Activated CD4-positive, alpha-beta memory T cell treated with anti-CD3 and anti-CD28 coated beads, Interleukin-2, amount 10 ng/mL, durations not matched to agents 7 days and 5 days (primary cell): ENCODE measurements at regions of chr14 and their contacts with region 1.

Region 1: DNA sequence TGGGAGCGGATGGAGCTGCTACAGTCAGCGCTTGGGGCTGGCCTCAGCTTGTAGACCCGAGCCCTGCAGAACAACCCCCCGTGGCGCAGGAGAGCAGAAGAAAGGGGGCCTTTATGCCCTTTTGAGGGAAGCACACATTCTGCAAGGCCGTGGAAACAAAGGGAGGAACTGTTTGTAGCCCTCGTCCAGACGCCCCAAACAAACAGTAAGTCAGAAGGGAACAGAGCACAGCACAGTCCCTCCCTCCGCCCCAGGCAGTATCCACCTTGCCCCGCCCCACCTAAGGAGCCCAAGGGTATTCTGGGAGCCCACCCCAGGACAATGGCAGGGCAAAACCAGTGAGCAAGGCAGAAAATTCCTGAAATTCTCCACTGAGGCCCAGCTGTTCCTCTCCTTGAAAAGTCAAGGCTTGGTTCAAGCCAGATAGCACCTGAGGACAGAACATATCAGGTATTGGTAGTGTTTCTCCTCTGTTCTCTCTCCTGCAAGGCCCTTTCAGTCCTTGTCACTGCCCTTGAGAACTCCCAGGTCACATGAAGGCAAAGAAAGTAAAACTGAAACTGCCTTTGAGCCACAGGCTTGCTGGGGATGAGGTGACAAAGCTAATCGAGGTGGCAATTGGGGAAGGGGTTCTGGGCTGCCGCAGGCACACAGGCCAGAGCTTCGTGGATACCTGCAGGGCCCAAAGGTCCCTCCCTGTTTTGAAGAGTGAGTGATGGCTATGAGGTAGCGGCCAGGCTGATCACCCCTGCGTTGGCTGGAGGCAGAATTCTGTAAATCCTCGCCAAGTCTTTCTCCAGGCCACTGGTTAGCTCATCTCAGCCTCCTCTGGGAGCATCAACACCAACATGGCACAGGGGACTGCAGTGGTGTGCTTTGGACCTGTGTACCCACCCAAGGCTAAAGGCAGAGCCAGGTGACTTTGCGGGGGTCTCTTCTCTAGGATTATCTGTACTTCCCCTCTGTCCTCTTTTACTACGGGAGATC is 499 bp downstream of the DGLUCY start:
- DNase-seq: peak; percentile 83
- H3K4me3 Mint-ChIP-seq: peak overlapping the region; percentile 94
- H3K27ac Mint-ChIP-seq: peak overlapping the region; percentile 96
- H3K4me1 Mint-ChIP-seq: peaks cover 65% of the 10 kb centered on the region
- H3K27me3 Mint-ChIP-seq: no peaks in the 10 kb centered on the region

Region 2: DNA sequence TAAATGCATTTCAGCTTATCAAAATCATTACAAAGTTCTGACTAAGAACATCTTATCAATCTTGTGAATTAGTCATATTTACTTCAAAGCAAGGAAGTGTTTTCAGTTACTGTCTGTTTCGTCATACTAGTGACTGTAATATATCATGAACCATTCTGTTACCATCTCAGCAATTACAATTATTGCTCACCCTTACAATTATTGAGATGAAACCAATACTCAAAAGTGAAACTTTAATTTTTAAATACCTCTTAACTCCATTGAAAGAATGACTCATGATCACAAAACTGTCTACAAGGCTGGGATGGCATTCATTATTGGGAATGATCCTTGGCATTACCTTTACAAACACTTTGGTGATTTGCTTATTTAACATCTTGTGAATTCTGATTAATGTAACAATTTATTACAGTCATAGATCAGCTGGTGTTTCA is 144.2 kb before region 1 on chr14:
- CTCF ChIA-PET with region 1: no interaction called
- POLR2A ChIA-PET with region 1: interaction called, 18 read pairs
- DNase-seq: no peak
- H3K4me3 Mint-ChIP-seq: peak overlapping the region; percentile 51
- H3K27ac Mint-ChIP-seq: peak overlapping the region; percentile 82
- H3K4me1 Mint-ChIP-seq: peaks cover 45% of the 10 kb centered on the region
- H3K27me3 Mint-ChIP-seq: no peaks in the 10 kb centered on the region

Region 3: DNA sequence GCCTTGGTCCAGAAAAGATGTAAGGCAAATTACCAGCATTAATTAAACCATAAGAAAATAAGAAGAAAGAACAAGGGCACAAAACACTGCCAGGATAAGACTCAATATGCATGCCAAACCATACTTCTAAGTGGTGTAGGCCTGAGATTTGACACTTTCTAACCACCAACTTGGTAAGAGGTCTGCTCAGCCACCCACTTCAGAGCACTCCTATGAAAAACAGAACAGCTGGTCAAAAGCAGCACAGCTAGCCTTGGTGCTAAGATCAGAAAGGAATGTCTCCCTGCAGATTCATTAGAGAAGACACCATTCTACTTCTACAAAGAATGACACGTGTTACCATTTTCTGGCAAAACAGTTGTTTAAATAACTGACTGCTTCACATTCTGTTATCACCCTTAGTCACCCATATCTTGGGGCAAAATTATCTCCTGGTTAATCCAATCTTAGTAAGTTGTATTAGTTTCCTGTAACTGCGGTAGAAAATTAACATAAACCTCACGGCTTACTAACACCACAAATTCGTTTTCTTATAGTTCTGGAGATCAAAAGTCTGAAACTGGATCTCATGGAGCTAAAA is 67.1 kb before region 1 on chr14:
- CTCF ChIA-PET with region 1: interaction called, 4 read pairs
- POLR2A ChIA-PET with region 1: interaction called, 21 read pairs
- DNase-seq: no peak
- H3K4me3 Mint-ChIP-seq: no peak overlapping the region
- H3K27ac Mint-ChIP-seq: peak overlapping the region; percentile 16
- H3K4me1 Mint-ChIP-seq: peaks cover 52% of the 10 kb centered on the region
- H3K27me3 Mint-ChIP-seq: no peaks in the 10 kb centered on the region

Region 4: DNA sequence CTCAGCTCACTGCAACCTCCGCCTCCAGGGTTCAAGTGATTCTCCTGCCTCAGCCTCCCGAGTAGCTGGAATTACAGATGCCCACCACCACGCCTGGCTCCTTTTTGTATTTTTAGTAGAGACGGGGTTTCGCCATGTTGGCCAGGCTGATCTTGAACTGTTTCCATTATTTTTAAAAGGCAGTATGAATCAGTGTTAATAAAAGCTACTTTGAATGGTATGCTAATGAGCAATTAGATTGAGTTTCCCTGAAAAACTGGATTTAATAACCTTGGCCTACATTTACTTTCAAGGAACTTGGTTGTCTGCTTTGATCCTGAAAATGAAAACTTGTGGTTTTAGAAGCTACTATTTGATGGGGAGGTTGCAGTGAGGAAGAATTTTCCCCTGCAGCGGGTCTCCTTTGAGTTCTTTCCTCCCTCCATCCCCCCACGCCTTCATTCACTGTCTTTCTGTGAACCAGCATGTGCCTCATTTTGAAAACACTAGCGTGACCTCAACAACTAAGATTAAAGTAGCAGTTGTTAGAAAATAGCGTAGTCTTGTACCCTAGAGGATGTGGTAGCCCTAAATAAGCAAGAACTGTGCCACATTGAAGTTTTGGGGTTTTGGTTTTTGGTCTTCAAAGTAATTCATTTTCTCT is 36.2 kb before region 1 on chr14:
- CTCF ChIA-PET with region 1: interaction called, 19 read pairs
- POLR2A ChIA-PET with region 1: interaction called, 107 read pairs
- DNase-seq: peak; percentile 64
- H3K4me3 Mint-ChIP-seq: peak overlapping the region; percentile 40
- H3K27ac Mint-ChIP-seq: peak overlapping the region; percentile 95
- H3K4me1 Mint-ChIP-seq: peaks cover 61% of the 10 kb centered on the region
- H3K27me3 Mint-ChIP-seq: no peaks in the 10 kb centered on the region

Region 5: GRCh38 chr14:91127401-91127854 is 13.1 kb after region 1 on chr14:
- CTCF ChIA-PET with region 1: interaction called, 3 read pairs
- POLR2A ChIA-PET with region 1: interaction called, 43 read pairs
- DNase-seq: no peak
- H3K4me3 Mint-ChIP-seq: no peak overlapping the region
- H3K27ac Mint-ChIP-seq: no peak overlapping the region
- H3K4me1 Mint-ChIP-seq: peaks cover 37% of the 10 kb centered on the region
- H3K27me3 Mint-ChIP-seq: no peaks in the 10 kb centered on the region

Region 6: DNA sequence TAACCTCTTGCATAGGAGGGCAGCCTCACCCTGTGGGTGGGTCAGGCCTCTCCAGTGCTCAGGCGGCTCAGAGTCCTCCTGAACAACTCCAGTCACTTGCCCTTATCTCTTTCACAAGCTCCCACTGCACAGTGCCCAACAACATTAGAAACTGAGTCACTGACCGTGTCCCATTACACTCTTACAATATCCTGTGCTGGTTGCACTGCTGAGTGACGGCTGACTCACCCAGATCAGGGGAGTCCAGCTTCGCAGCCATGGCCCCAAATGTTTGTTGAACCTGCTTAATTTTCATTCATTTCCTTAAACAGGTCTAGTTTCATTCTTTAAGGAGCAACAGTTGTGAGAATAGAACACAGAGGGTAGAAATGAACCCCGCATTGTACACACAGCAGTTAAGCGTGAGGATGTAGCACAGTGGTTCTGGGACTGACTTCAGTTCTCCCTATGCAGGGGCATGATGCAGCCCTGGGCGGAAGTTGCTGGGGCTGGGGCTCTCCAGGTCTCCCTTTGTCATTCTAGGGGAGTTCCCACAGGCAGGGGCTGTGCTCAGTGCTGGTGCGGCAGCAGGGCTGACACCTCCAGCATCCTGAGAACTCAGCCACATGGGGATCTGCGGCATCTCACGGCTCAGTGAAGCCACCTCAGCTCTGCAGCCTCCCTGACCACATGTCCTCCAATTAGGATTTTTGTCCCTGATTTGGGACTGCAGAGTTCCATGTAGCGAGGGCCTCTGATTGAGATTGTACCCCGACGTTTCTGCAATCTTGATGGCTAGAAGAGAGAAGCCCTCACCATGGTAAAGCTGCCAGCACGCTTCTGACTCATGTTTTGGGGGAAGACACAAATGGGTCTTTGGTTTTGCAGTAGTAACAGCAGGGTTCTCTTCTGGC is 114.0 kb after region 1 on chr14:
- CTCF ChIA-PET with region 1: no interaction called
- POLR2A ChIA-PET with region 1: interaction called, 15 read pairs
- DNase-seq: peak; percentile 88
- H3K4me3 Mint-ChIP-seq: peak overlapping the region; percentile 62
- H3K27ac Mint-ChIP-seq: peak overlapping the region; percentile 100
- H3K4me1 Mint-ChIP-seq: peaks cover 91% of the 10 kb centered on the region
- H3K27me3 Mint-ChIP-seq: no peaks in the 10 kb centered on the region